HEK293 (cell line): ENCODE measurements at regions of chr12 and their contacts with region 1.

Region 1: GRCh38 chr12:112198120-112198733 is 72.9 kb downstream of the TRAFD1 start:
- H3K4me3 ChIP-seq: no peak overlapping the region
- H3K27ac ChIP-seq: no peak overlapping the region
- H3K4me1 ChIP-seq: no peaks in the 10 kb centered on the region
- CTCF ChIP-seq: peak; percentile 34; the same call in 1 of the 2 replicates

Region 2: DNA sequence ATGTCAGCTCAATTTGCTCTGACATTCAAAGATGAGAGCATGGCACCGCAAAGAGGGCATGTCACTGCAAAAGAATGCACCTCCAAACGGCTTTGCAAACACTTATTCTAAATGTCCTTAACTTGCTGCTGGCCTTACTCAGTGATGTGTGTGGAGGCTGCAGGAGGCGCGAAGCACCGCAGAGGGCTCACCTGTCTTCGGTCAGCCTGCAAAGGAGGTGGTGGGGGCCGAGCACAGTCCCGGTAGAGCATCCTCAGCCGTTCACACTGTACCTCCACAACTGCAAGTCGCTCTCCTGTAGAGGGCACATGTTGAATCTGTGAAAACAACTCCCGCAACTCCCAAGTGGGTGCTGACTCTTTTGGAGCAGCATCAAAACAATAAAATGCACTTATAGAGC is 21.0 kb after region 1 on chr12:
- CTCF ChIA-PET with region 1: interaction called, 12 read pairs
- POLR2A ChIA-PET with region 1: no interaction called
- H3K4me3 ChIP-seq: no peak overlapping the region
- H3K27ac ChIP-seq: no peak overlapping the region
- H3K4me1 ChIP-seq: no peaks in the 10 kb centered on the region
- CTCF ChIP-seq: no peak

Region 3: DNA sequence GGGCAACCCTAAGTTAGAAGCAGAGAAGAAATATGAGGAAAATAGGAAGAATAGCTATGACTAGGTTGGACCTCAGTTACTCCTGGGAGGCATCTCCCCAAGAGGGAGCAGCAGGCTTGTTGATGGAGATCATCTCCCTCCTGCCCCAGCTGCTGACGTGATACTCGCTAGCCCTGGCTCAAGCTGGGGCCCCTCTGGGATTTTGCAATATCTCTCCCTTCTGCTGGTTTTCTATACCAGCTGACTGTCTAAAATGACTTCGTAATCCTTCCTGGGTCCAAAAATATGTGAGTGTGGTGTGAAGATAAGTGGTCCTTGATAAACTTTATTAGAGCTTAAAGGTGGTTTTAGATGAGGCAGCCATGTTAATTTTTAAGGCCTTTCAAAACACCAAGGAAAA is 188.5 kb after region 1 on chr12:
- CTCF ChIA-PET with region 1: interaction called, 55 read pairs
- POLR2A ChIA-PET with region 1: interaction called, 4 read pairs
- H3K4me3 ChIP-seq: no peak overlapping the region
- H3K27ac ChIP-seq: no peak overlapping the region
- H3K4me1 ChIP-seq: 0 out of 2 replicates have a peak, but pooled peaks cover 2% of the 10 kb centered on the region
- CTCF ChIP-seq: no peak